Activated T-helper 2 cell treated with anti-CD3 and anti-CD28 coated beads, Interferon-gamma antibody, Interleukin-2, Interleukin-4, amounts not matched to agents 10 μg/mL and 5 μg/mL and 100 μg/mL, durations not matched to agents 14 hours and 24 hours and 36 hours (primary cell): ENCODE measurements at regions of chr7 and their contacts with region 1.

Region 1: DNA sequence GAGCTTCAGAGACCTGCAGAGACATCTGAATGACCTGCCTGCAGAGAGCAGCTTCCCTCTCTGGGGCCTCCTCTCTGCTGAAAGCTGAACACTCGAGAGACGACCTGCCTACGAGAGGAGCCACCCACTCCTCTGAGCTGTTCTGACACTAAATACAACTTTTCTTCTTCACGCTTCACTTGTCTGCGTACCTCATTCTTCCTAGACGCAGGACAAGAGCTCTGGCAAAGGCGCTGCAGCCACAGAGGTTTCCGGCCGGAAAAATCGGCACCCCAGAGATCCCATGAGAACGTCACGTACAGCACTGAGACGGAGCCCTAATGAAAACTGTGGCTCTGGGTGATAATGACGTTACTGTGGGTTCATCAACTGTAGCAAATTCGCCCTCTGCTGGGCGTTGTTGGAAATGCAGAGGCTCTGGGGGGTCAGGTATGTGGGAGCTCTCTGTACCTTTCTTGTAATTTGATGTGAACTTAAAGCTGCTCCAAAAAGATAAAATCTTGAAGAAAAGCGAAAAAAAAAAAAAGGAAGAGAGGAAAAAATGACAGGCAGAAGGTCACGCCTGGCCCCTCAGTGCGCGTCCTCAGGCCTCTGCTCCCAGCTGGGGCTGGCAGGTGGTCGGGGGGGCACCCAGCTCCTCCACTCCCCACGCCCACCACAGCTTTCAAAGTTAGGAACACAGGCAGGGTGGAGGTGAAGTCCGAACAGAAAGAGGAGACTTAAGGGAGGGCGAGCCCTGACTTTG is 120.7 kb downstream of the DYNC2I1 start:
- DNase-seq: peak; percentile 79
- H3K4me3 Mint-ChIP-seq: peak overlapping the region; percentile 77
- H3K27ac Mint-ChIP-seq: peak overlapping the region; percentile 88
- H3K4me1 Mint-ChIP-seq: peaks cover 17% of the 10 kb centered on the region
- H3K27me3 Mint-ChIP-seq: no peaks in the 10 kb centered on the region

Region 2: DNA sequence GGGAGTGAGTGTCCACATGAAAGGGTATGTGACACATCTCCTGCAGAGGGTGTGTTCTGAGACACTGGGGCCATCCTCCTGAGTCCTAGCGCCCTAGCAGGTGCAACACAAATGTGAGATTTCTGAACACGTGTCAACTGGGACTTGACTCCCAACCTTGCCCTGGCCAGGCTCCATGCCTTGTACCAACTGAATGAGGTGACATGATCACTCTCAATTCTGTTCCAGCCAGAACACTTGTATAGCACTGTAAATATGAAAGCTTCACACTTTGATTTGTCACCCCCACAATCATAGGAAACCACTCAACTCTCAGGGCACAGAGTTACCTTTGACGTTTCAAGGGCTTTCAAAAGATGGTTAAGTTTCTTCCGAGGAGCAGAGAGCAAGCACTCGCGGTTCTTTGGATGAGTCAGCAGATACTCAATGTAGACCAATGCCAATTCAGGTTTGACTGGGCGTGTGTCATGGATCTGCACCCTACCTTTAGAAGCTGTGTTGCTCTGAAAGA is 321.0 kb before region 1 on chr7:
- intact Hi-C with region 1: loop called (anchors 10 kb)
- DNase-seq: peak; percentile 66
- H3K4me3 Mint-ChIP-seq: no peak overlapping the region
- H3K27ac Mint-ChIP-seq: peak overlapping the region; percentile 88
- H3K4me1 Mint-ChIP-seq: peaks cover 31% of the 10 kb centered on the region
- H3K27me3 Mint-ChIP-seq: no peaks in the 10 kb centered on the region

Region 3: GRCh38 chr7:158704704-158705468 is 272.1 kb before region 1 on chr7 and contains the start of gene NCAPG2:
- intact Hi-C with region 1: loop called (anchors 2 kb)
- DNase-seq: peak; percentile 94
- H3K4me3 Mint-ChIP-seq: peak within 1 kb of the TSS; percentile 82
- H3K27ac Mint-ChIP-seq: peak within 1 kb of the TSS; percentile 87
- H3K4me1 Mint-ChIP-seq: peaks cover 43% of the 10 kb centered on the region
- H3K27me3 Mint-ChIP-seq: no peaks in the 10 kb centered on the region
- total RNA-seq, gene NCAPG2: 94.7 and 101 TPM in 2 replicates

Region 4: DNA sequence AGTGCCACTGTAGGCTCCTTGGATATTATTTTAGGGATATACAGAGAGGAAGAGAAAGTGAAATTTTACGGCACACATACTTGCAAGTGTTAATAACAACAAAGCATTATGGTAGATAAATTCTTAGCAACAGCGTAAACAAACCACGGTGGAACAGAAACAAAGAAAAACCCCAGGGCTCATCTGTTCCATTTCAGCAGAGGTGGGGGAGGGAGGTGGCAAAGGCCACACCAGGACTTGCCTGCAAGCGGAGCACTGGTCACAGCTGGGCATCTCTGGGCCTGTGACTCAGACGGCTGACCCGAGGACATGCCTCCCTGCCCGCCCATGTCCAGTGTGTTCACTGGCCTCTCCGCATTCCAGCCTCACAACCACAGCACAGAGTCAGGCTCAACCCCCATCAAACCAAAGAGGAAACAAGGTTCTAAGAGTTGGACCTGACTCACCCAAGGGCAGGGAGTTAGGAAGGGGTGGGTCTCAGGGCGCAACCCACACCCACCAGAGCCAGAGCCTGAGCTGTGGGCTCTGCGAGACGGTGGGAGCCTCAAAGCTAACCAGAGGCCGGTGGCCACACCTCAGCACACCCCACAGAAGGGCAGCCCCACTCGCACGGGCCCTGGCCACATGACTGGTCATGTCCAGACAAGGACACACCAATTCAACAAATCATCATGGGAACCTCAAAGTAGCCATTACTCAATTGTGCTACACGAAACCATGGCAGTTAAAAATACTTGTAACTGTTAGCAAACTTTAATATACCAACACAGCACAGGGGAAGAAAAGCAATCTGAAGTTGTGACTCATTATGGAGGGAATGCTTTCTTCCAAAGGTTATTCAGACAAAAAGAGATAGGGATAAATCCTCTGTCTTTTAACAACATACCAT is 158.5 kb before region 1 on chr7:
- intact Hi-C with region 1: loop called (anchors 5 kb)
- DNase-seq: peak; percentile 79
- H3K4me3 Mint-ChIP-seq: peak overlapping the region; percentile 70
- H3K27ac Mint-ChIP-seq: peak overlapping the region; percentile 95
- H3K4me1 Mint-ChIP-seq: peaks cover 83% of the 10 kb centered on the region
- H3K27me3 Mint-ChIP-seq: no peaks in the 10 kb centered on the region

Region 5: GRCh38 chr7:159143780-159144757 is 167.0 kb after region 1 on chr7:
- intact Hi-C with region 1: no loop called
- DNase-seq: peak; percentile 19
- H3K4me3 Mint-ChIP-seq: peak overlapping the region; percentile 75
- H3K27ac Mint-ChIP-seq: no peak overlapping the region
- H3K4me1 Mint-ChIP-seq: peaks cover 10% of the 10 kb centered on the region
- H3K27me3 Mint-ChIP-seq: peaks cover 31% of the 10 kb centered on the region

Region 6: DNA sequence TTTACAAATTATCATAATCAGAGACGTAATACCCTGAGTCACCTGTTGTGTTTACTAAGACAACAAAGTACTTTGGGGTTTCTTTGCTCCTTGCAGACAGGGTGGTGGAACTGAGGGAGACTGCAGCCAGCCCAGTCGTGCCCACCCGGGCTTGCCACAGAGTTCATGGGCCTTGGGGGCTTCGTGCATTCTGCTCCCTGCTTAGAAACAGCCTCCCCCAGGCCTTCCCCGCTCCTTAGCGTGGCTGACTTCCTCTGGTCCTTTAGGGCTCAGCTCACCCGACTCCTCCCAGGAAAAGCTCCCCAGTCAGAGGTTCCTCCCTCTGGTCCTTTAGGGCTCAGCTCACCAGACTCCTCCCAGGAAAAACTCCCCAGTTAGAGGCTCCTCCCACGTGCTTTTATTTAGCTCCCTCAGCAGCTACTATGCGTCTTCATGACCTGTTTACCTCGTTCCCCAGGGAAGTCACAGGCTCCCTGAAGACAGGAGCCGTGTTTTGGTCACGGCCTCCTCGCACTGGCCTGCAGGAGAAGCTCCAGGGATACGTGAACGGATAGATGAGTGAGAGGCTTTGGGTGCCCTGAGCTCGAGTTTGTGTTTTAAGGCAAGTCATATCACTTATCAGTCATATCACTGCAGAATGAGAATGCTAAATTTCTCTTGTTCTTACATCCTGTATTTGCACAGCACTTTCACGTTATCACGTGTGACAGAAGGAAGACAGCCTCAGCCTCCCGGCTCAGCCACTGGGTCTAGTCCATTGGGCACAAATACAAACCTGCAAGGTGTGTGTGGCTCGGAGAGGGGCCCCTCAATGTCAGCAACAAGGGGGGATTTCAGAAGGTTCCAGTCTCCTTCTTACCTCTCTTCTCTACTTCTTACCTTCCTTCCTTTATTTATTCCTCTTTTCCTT is 220.3 kb after region 1 on chr7:
- intact Hi-C with region 1: loop called (anchors 1 kb)
- DNase-seq: peak; percentile 55
- H3K4me3 Mint-ChIP-seq: peak overlapping the region; percentile 78
- H3K27ac Mint-ChIP-seq: peak overlapping the region; percentile 97
- H3K4me1 Mint-ChIP-seq: peaks cover 35% of the 10 kb centered on the region
- H3K27me3 Mint-ChIP-seq: no peaks in the 10 kb centered on the region